Panc1 (cell line): ENCODE measurements at regions of chr1 and their contacts with region 1.

Region 1: DNA sequence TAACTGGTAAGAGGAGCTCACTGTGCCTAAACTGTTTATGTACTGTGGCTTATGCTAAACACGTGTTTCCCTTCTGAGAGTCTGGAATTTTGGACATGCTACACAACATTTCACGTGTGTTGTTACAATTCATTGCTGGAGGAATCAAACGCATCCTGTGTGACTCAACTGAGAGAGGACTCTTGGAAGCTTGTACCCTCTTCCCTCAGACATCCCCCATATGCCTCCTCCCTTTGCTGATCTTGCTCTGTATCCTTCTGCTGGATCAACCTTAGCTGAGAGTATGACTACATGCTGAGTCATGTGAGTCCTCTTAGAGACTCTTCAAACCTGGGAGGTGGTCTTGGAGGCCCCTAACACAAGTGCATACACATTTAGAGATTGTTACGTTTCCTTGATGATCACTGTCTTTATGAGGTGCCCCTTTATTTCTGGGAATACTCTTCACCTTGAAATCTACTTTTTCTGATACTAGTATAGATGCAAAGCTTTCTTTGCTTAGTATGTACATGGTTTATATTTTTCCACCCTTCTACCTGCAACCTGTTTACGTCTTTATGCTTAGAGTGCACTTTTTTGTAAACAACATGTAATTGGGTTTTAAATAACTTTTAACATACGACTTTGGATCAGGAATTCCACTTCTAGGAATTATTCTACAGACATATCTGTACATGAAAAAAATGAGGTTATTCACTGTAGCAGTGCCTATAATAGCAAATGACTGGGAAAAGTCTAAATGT is 8.7 kb downstream of the NPHP4 start:
- DNase-seq: no peak
- ATAC-seq: no peak
- H3K4me3 ChIP-seq: no peak overlapping the region
- H3K27ac ChIP-seq: no peak overlapping the region
- H3K4me1 ChIP-seq: no peaks in the 10 kb centered on the region
- H3K27me3 ChIP-seq: no peaks in the 10 kb centered on the region
- CTCF ChIP-seq: no peak

Region 2: DNA sequence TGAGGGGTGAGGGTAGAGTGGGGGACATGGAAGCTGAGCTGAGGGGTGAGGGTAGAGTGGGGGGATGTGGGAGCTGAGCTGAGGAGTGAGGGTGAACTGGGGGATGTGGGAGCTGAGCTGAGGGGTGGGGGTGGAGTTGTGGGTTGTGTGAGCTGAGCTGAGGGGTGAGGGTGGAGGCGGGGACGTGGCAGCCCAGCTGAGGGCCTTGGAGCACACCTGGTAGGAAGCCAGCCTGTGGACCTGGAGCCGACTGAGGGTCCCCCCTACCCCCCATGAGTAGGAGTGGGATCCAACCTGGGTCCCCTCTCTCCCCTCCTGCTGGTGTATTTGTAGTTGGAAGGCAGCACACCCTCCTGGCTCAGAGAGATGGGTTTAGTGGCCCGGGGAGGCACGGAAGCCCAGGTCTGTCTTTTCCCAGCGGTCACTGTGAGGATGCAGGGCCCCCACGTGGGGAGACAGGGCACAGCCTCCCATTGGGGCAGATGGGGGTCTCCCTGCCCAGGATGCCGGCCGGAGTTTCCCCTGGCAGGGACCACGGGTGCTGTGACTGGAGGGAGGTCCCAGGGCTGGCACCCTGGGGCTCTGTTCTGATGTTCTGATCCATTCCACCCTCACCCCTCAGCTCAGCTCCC is 21.9 kb after region 1 on chr1:
- CTCF ChIA-PET with region 1: no interaction called
- POLR2A ChIA-PET with region 1: interaction called, 13 read pairs
- in situ Hi-C with region 1: no loop called
- intact Hi-C with region 1: no loop called
- DNase-seq: no peak
- ATAC-seq: no peak
- H3K4me3 ChIP-seq: no peak overlapping the region
- H3K27ac ChIP-seq: no peak overlapping the region
- H3K4me1 ChIP-seq: peaks cover 5% of the 10 kb centered on the region; the same call in 1 of the 2 replicates
- H3K27me3 ChIP-seq: no peaks in the 10 kb centered on the region
- CTCF ChIP-seq: no peak

Region 3: GRCh38 chr1:6842301-6842700 is 858.8 kb after region 1 on chr1:
- CTCF ChIA-PET with region 1: no interaction called
- POLR2A ChIA-PET with region 1: no interaction called
- in situ Hi-C with region 1: no loop called
- intact Hi-C with region 1: no loop called
- DNase-seq: no peak
- ATAC-seq: no peak
- H3K4me3 ChIP-seq: no peak overlapping the region
- H3K27ac ChIP-seq: no peak overlapping the region
- H3K4me1 ChIP-seq: no peaks in the 10 kb centered on the region
- H3K27me3 ChIP-seq: no peaks in the 10 kb centered on the region
- CTCF ChIP-seq: no peak